Posterior cingulate gyrus (tissue), 11 donors: ENCODE measurements at regions of chr11 and their contacts with region 1.

Region 1: DNA sequence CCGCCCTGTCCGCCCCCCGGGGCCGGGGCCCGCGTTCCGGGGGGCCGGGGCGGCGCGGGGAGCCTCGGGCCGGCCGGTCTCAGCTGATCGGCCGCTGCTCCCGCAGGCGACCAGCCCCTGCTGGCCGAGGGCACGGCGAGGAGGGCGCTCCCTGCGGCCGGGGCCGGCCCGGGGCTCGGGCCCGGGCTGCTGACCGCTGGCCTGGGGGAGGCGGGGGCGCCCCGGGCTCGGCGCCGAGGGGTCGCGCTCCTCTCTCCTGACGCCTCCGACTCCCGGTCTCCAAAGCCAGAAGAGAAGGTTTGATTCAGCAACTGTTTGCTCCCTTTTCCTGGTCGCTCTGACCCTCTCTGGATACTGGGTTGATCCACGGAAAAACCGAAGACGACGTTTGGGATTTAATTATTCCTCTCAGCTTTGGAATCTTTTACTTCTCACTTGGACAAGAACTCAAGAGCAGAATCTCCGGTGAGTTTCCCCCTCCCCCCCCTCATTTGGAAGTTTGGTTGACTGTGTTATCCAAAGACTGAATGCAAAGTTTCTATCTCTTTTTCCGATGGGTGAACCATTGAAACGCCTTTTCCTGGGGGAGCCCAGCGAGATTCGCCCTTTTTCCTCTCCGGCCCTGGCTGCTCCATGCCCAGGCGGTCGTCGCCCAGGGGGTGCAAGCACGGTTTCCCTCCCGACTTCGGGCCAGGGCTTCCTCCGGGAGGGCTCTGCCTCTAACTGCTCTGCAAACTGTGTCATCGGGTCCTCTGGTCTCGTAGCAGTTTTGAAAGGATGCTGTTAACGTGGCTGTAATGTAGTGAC is 725 bp downstream of the KDM2A start:
- DNase-seq: peak in 6 of 10 donors; percentile 15 to 86 (median 58)

Region 2: GRCh38 chr11:66800720-66801428 is 318.9 kb before region 1 on chr11:
- intact Hi-C with region 1: no loop called
- DNase-seq: no peak

Region 3: GRCh38 chr11:67239783-67240575 is 120.2 kb after region 1 on chr11:
- intact Hi-C with region 1: loop called (anchors 2 kb)
- DNase-seq: peak; percentile 90 to 100 (median 96)